Activated naive CD4-positive, alpha-beta T cell treated with anti-CD3 and anti-CD28 coated beads, Interleukin-2, amount 10 ng/mL, durations not matched to agents 7 days and 5 days (primary cell): ENCODE measurements at regions of chr1 and their contacts with region 1.

Region 1: GRCh38 chr1:150051089-150051373 is 16.5 kb upstream of the VPS45 start:
- DNase-seq: no peak
- H3K4me3 Mint-ChIP-seq: no peak overlapping the region
- H3K27ac Mint-ChIP-seq: no peak overlapping the region
- H3K4me1 Mint-ChIP-seq: peaks cover 3% of the 10 kb centered on the region
- H3K27me3 Mint-ChIP-seq: peaks cover 27% of the 10 kb centered on the region

Region 2: DNA sequence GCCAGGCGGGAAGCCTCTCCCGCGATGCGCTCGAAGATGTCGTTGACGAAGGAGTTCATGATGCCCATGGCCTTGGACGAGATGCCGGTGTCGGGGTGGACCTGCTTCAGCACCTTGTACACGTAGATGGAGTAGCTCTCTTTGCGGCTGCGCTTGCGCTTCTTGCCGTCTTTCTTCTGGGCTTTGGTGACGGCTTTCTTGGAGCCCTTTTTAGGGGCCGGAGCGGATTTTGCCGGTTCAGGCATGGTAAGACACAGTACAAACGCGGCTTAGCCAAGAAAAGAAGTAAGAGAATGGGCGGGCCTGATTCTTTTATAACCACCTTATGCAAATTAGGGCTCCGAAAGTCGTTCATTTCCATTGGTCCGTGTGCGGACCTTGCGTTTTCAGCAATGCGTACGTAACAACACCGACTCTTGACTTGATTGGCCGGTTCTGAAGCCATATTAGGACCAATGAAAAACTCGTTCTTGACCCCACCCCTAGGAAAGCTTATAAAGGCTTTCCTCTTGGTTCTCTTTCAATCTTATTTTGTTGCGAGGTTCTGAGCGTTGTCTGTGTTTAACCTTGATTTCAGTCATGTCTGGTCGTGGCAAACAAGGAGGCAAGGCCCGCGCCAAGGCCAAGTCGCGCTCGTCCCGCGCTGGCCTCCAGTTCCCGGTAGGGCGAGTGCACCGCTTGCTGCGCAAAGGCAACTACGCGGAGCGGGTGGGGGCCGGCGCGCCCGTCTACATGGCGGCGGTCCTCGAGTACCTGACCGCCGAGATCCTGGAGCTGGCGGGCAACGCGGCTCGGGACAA is 164.4 kb before region 1 on chr1:
- CTCF ChIA-PET with region 1: interaction called, 15 read pairs
- DNase-seq: peak; percentile 90
- H3K4me3 Mint-ChIP-seq: no peak overlapping the region
- H3K27ac Mint-ChIP-seq: no peak overlapping the region
- H3K4me1 Mint-ChIP-seq: peaks cover 18% of the 10 kb centered on the region
- H3K27me3 Mint-ChIP-seq: no peaks in the 10 kb centered on the region

Region 3: DNA sequence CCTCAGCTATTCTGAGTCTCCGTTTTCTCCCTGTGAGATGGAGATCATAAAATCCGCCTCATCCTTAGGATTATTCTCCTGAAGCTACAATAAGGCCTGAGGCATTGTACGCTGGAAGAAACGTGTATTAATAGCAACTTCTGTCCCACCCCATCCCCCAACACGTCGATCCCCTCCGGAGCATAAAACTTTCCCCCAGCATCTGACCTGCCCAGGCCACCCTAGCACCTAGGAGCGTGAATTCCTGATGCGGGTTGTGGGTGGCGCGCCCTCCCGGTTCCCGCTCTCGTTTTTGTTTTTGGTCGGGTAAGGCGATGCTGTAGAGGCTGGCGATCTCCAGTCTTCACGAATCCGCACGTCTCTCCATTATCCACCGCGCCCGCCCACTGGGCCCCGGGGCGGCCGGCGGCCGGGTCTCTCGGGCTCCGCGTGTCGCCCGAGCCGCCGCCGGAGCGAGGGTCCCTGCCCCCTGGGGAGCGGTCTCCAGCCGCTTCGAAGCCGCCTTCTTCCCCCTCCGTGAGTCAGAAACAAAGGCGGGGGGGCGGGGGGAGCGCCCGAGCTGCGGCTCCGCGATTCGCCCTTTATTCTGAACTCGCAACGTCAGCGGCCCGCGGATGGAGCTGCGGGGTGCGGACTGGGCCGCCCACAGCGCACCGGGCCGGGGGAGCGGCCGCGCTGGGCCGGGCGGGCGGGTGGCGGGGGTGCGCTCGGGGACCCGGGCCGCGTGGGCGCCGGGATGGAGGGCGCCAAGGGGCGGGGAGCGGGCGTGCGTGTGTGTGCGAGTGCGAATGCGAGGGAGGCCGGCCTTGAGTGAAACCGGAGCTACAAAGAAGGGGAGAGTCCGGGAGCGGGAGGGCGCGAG is 98.5 kb after region 1 on chr1 and contains the start of gene PLEKHO1:
- CTCF ChIA-PET with region 1: no interaction called
- DNase-seq: peak; percentile 90
- H3K4me3 Mint-ChIP-seq: peak within 1 kb of the TSS; percentile 98
- H3K27ac Mint-ChIP-seq: peak within 1 kb of the TSS; percentile 97
- H3K4me1 Mint-ChIP-seq: peaks cover 74% of the 10 kb centered on the region
- H3K27me3 Mint-ChIP-seq: peaks cover 17% of the 10 kb centered on the region